ENCODE measurements at regions of chr1 and their contacts with region 1.

Region 1: DNA sequence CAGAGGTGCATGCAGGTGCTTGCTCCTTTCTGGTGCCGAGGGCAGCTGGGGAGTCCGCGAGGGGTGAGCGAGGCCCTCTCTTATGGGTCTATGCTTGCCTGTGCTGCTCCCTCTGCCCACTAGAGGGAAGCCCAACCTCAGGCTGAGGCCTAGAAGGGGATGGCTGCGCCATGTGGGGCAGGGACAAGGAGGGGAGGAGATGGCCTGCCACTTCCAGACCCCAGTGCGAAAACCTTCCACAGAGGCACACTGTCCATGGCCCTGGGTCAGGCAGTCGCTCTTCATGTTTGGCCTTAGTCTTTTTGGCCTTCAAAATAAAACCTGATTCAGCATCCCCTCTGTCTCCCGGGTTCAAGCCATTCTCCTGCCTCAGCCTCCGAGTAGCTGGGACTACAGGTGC is 14.0 kb downstream of the RHBG start:
- H3K4me3 ChIP-seq: no peak overlapping the region
- H3K27ac ChIP-seq: no peak overlapping the region
- H3K4me1 ChIP-seq: no peaks in the 10 kb centered on the region
- CTCF ChIP-seq: peak; percentile 83

Region 2: GRCh38 chr1:156356875-156357534 is 26.0 kb before region 1 on chr1:
- CTCF ChIA-PET with region 1: interaction called, 25 read pairs
- POLR2A ChIA-PET with region 1: no interaction called
- H3K4me3 ChIP-seq: no peak overlapping the region; the same call in 1 of the 2 replicates
- H3K27ac ChIP-seq: no peak overlapping the region
- H3K4me1 ChIP-seq: no peaks in the 10 kb centered on the region
- CTCF ChIP-seq: peak; percentile 98

Region 3: GRCh38 chr1:156401681-156402081 is 18.7 kb after region 1 on chr1:
- CTCF ChIA-PET with region 1: interaction called, 17 read pairs
- POLR2A ChIA-PET with region 1: no interaction called
- H3K4me3 ChIP-seq: no peak overlapping the region
- H3K27ac ChIP-seq: no peak overlapping the region
- H3K4me1 ChIP-seq: no peaks in the 10 kb centered on the region
- CTCF ChIP-seq: no peak

Region 4: GRCh38 chr1:156421062-156421938 is 38.3 kb after region 1 on chr1:
- CTCF ChIA-PET with region 1: interaction called, 23 read pairs
- POLR2A ChIA-PET with region 1: no interaction called
- H3K4me3 ChIP-seq: peak overlapping the region; percentile 17
- H3K27ac ChIP-seq: no peak overlapping the region
- H3K4me1 ChIP-seq: peaks cover 2% of the 10 kb centered on the region; the same call in 1 of the 2 replicates
- CTCF ChIP-seq: no peak

Region 5: GRCh38 chr1:156435545-156436141 is 52.6 kb after region 1 on chr1:
- CTCF ChIA-PET with region 1: interaction called, 110 read pairs
- POLR2A ChIA-PET with region 1: no interaction called
- H3K4me3 ChIP-seq: no peak overlapping the region
- H3K27ac ChIP-seq: no peak overlapping the region
- H3K4me1 ChIP-seq: peaks cover 3% of the 10 kb centered on the region; the same call in 1 of the 2 replicates
- CTCF ChIP-seq: no peak

Region 6: GRCh38 chr1:156456622-156457465 is 73.8 kb after region 1 on chr1:
- CTCF ChIA-PET with region 1: interaction called, 439 read pairs
- POLR2A ChIA-PET with region 1: interaction called, 7 read pairs
- H3K4me3 ChIP-seq: peak overlapping the region; percentile 58
- H3K27ac ChIP-seq: peak overlapping the region; percentile 99
- H3K4me1 ChIP-seq: no peaks in the 10 kb centered on the region
- CTCF ChIP-seq: no peak

Region 7: DNA sequence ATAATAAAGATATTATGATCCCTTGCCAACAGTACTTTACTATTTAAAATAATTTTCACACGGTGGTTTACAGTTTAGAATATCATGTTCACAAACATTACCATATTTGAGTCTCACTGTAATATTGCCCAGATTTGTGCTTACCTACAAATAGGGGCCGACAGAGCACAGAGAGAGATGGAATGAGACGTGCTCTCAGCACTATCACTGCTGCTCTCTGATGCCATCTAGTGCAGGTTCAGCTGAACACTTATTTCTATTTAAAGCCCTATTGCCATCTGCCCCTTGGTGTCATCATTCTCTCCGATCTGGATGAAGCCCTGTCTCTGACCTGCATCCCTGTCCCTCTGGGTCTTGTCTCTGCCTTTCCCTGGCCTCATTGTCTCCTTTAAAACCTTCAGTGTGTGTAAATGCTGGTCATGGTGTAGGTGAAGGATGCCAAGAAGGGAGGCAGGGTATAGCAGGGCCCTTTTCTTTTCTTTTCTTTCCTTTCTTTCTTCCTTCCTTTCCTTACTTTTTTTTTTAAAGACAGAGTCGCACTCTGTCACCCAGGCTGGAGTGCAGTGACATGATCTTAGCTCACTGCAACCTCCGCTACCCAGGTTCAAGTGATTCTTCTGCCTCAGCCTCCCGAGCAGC is 225.1 kb after region 1 on chr1:
- CTCF ChIA-PET with region 1: interaction called, 10 read pairs
- POLR2A ChIA-PET with region 1: no interaction called
- H3K4me3 ChIP-seq: no peak overlapping the region
- H3K27ac ChIP-seq: no peak overlapping the region
- H3K4me1 ChIP-seq: no peaks in the 10 kb centered on the region
- CTCF ChIP-seq: peak; percentile 85